Activated CD8-positive, alpha-beta T cell treated with anti-CD3 and anti-CD28 coated beads, Interleukin-2, amount 10 ng/mL, durations not matched to agents 7 days and 5 days (primary cell): ENCODE measurements at regions of chr3 and their contacts with region 1.

Region 1: DNA sequence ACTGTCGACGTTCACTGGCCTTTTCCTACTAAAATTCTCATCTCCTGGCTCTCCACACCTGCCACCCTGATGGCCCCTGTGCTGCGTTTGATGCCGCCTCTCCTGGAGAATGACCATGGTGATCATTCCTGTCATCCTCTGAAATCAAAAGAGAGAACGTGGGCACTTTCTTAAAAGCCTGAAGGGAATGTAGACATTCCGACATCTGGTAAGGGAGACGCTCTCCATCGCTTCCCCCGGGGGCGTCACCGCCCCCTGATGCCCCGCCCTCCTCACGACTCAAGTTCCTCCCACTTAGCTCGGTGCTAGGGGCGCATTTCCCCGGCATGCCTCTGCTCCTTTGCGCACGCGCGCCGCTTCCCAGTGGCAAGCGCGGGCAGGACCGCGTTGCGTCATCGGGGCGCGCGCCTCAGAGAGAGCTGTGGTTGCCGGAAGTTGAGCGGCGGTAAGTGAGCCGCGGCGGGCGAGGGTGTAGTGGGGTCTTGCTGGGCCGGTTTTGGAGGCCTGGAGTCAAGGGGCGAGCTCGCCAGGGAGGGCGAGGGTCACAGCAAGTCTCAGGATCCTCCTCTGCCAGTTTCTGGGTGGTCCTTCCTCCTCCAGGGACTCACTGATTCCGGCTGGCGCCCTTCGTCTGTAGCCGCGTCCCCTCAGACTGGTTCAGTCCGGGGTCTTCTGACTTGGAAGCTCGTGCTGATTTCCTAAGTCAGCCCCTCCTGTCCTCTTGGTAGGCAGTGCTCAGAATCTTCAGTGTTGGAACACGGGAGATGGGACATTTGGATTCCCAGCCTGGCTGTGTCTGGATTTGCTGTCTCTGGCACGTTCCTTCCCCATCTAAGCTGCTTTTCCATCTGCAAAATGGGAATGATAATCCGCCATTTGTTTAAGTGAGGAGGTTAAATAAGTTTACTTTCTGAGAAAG is at the start of gene ATG7:
- DNase-seq: peak; percentile 97
- ATAC-seq: peak; percentile 98
- H3K4me3 Mint-ChIP-seq: peak within 1 kb of the TSS; percentile 91
- H3K27ac Mint-ChIP-seq: peak within 1 kb of the TSS; percentile 96
- H3K4me1 Mint-ChIP-seq: peaks cover 36% of the 10 kb centered on the region
- H3K27me3 Mint-ChIP-seq: no peaks in the 10 kb centered on the region
- total RNA-seq, gene ATG7: 36.8 to 40.0 TPM

Region 2: DNA sequence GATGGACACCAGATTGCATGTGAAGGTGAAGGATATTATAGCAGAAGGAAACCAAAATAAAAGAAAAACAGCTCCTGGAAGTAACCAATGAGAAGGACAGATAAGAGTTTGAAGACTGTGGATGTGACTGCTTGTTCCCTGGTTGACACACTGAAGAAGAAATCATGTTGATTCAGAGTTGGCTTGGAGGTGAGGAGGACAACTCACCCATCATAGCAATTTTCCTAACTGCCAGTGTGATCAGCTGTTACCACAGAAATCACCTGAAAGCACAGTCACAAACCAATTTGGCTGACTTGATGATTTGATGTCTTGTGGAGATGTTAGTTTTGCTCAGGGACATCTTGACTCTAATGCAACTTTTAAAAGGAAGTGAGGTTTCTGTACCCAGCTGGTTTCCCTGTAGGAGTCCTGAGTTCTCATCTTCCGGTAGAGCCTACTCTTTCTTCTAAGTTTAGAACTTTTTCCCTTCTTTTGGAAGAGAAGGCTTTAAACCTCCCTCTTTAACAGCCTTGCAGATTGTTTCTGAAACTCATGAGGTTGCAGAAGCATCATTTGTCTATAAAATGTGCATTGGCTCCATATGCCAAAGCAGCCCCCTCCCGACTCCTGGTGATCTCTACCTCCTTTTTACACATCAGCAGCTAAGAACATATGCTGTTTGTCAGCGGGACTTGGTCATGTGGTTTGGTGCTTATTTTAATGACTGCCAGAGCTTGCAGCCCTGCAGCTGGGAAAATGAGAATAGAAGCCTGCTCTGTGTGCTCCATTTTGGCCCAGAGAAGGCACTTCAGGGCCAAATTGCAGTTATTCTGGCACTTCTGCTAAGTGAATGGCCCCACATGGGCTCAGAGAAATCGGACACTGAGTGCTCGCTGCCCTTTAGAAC is 10.2 kb after region 1 on chr3:
- CTCF ChIA-PET with region 1: interaction called, 18 read pairs
- POLR2A ChIA-PET with region 1: interaction called, 30 read pairs
- DNase-seq: no peak
- ATAC-seq: no peak
- H3K4me3 Mint-ChIP-seq: no peak overlapping the region
- H3K27ac Mint-ChIP-seq: no peak overlapping the region
- H3K4me1 Mint-ChIP-seq: peaks cover 23% of the 10 kb centered on the region
- H3K27me3 Mint-ChIP-seq: no peaks in the 10 kb centered on the region

Region 3: GRCh38 chr3:11288786-11289682 is 16.8 kb after region 1 on chr3:
- CTCF ChIA-PET with region 1: interaction called, 32 read pairs
- POLR2A ChIA-PET with region 1: interaction called, 33 read pairs
- DNase-seq: peak; percentile 50
- ATAC-seq: peak; percentile 49
- H3K4me3 Mint-ChIP-seq: peak overlapping the region; percentile 45
- H3K27ac Mint-ChIP-seq: peak overlapping the region; percentile 95
- H3K4me1 Mint-ChIP-seq: peaks cover 55% of the 10 kb centered on the region
- H3K27me3 Mint-ChIP-seq: no peaks in the 10 kb centered on the region

Region 4: GRCh38 chr3:11306817-11307589 is 34.8 kb after region 1 on chr3:
- CTCF ChIA-PET with region 1: interaction called, 5 read pairs
- POLR2A ChIA-PET with region 1: interaction called, 10 read pairs
- DNase-seq: peak; percentile 59
- ATAC-seq: peak; percentile 89
- H3K4me3 Mint-ChIP-seq: no peak overlapping the region
- H3K27ac Mint-ChIP-seq: peak overlapping the region; percentile 83
- H3K4me1 Mint-ChIP-seq: peaks cover 29% of the 10 kb centered on the region
- H3K27me3 Mint-ChIP-seq: no peaks in the 10 kb centered on the region

Region 5: GRCh38 chr3:11835028-11835639 is 562.9 kb after region 1 on chr3:
- CTCF ChIA-PET with region 1: no interaction called
- POLR2A ChIA-PET with region 1: no interaction called
- DNase-seq: no peak
- ATAC-seq: no peak
- H3K4me3 Mint-ChIP-seq: no peak overlapping the region
- H3K27ac Mint-ChIP-seq: no peak overlapping the region
- H3K4me1 Mint-ChIP-seq: no peaks in the 10 kb centered on the region
- H3K27me3 Mint-ChIP-seq: no peaks in the 10 kb centered on the region